ENCODE measurements at regions of chr17 and their contacts with region 1.

Region 1: DNA sequence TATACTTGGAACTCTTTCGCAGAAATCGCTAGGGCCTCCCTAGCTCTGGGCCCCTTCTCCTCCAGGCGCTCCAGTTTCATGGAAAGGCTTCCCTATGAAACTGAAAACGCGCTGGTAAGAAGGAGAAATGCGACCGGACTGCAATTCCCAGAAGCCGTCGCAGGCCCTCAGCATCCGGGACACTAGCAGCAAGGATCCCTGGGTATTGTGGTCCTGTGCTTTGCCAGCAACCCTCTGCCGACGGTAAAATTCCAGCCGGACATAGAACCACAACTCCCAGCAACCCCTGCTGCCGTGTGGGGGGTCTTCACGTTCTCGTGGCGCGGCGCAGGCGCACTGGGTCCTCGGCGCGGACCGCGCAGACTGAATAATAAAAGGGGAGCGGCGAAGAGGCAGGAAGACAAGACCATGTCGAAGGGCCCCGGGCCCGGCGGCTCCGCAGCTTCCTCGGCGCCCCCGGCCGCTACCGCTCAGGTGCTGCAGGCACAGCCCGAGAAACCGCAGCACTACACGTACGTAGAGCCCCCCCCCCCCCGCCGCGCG is at the start of gene UNK:
- DNase-seq: peak; percentile 89
- ATAC-seq: peak; percentile 73
- H3K4me3 Mint-ChIP-seq: peak within 1 kb of the TSS; percentile 86
- H3K27ac Mint-ChIP-seq: peak within 1 kb of the TSS; percentile 99
- H3K4me1 Mint-ChIP-seq: peaks cover 57% of the 10 kb centered on the region
- H3K27me3 Mint-ChIP-seq: no peaks in the 10 kb centered on the region
- CTCF ChIP-seq: no peak
- total RNA-seq, gene UNK: 52.3 and 61.2 TPM in 2 replicates

Region 2: GRCh38 chr17:75667021-75667790 is 117.3 kb before region 1 on chr17 and contains the starts of genes RECQL5 and SAP30BP:
- CTCF ChIA-PET with region 1: no interaction called
- POLR2A ChIA-PET with region 1: interaction called, 14 read pairs
- intact Hi-C with region 1: loop called (anchors 1 kb)
- DNase-seq: peak; percentile 95
- ATAC-seq: peak; percentile 74
- H3K4me3 Mint-ChIP-seq: peak within 1 kb of the TSS; percentile 55
- H3K27ac Mint-ChIP-seq: peak within 1 kb of the TSS; percentile 27
- H3K4me1 Mint-ChIP-seq: peaks cover 47% of the 10 kb centered on the region
- H3K27me3 Mint-ChIP-seq: no peaks in the 10 kb centered on the region
- CTCF ChIP-seq: no peak
- total RNA-seq, gene RECQL5: 55.9 and 65.4 TPM in 2 replicates
- total RNA-seq, gene SAP30BP: 177 and 184 TPM in 2 replicates

Region 3: DNA sequence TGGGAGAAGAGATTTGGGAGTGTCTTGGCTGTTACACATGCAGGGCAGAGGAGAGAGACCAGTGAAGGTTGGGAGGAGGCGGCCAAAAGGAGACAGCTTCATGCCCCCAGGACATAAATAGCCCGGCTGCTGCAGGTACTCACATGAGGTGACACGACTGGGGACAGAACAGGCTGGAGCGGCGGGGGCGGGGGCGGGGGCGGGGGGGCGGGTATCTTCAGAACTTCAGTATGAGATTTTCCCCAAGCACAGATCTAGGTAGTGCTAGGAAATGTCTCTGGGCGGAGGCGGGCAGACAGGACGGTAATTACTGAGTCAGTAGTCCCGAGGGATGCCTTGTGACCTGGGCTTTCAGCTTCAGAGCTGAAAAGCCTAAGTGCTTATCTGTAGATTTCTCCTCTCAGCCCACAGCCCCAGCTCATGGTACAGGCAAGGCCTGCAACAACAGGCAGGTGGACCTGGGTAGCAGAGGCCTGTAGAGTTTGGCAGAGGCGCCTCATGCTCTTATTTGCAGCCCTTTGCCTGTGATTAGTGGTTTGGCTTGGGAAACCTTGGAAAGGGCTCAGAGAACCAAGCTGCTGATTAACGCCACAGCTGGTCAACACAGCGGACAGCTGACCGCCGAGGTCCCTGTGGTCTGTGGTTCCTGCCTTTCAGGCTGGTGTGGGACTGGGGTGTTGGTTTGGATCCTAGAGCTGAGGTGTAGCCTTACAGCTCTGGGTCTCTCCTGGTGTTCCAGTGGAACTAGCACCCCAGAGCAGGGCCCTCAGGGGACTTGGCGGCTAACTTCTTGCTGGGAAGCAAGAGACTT is 24.6 kb after region 1 on chr17:
- CTCF ChIA-PET with region 1: no interaction called
- POLR2A ChIA-PET with region 1: interaction called, 21 read pairs
- intact Hi-C with region 1: loop called (anchors 2 kb)
- DNase-seq: no peak
- ATAC-seq: peak; percentile 99
- H3K4me3 Mint-ChIP-seq: no peak overlapping the region
- H3K27ac Mint-ChIP-seq: peak overlapping the region; percentile 19
- H3K4me1 Mint-ChIP-seq: peaks cover 15% of the 10 kb centered on the region
- H3K27me3 Mint-ChIP-seq: no peaks in the 10 kb centered on the region
- CTCF ChIP-seq: no peak

Region 4: GRCh38 chr17:75845049-75845860 is 60.7 kb after region 1 on chr17:
- CTCF ChIA-PET with region 1: interaction called, 9 read pairs
- POLR2A ChIA-PET with region 1: interaction called, 70 read pairs
- intact Hi-C with region 1: loop called (anchors 1 kb)
- DNase-seq: peak; percentile 71
- ATAC-seq: peak; percentile 90
- H3K4me3 Mint-ChIP-seq: peak overlapping the region; percentile 66
- H3K27ac Mint-ChIP-seq: peak overlapping the region; percentile 75
- H3K4me1 Mint-ChIP-seq: peaks cover 29% of the 10 kb centered on the region
- H3K27me3 Mint-ChIP-seq: no peaks in the 10 kb centered on the region
- CTCF ChIP-seq: no peak

Region 5: DNA sequence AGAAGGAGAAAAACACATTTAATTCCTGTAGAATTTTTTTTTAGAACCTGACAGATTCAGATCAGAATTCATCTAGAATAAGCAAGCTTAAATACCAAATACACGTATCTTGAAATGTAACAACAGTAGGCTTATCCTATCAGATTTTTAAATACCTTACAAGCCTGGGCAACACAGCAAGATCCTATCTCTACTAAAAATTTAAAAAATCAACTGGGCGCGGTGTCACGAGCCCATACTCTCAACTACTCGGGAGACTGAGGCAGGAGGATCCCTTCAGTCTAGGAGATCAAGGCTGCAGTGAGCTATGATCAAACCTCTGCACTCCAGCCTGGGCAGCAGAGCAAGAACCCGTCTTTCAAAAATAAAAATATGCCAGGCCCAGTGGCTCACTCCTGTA is 180.9 kb after region 1 on chr17:
- CTCF ChIA-PET with region 1: no interaction called
- POLR2A ChIA-PET with region 1: no interaction called
- intact Hi-C with region 1: no loop called
- DNase-seq: no peak
- ATAC-seq: no peak
- H3K4me3 Mint-ChIP-seq: no peak overlapping the region
- H3K27ac Mint-ChIP-seq: no peak overlapping the region
- H3K4me1 Mint-ChIP-seq: peaks cover 13% of the 10 kb centered on the region
- H3K27me3 Mint-ChIP-seq: no peaks in the 10 kb centered on the region
- CTCF ChIP-seq: no peak

Region 6: GRCh38 chr17:75978938-75979704 is 194.6 kb after region 1 on chr17 and contains the starts of genes ACOX1 and TEN1:
- CTCF ChIA-PET with region 1: no interaction called
- POLR2A ChIA-PET with region 1: interaction called, 14 read pairs
- intact Hi-C with region 1: loop called (anchors 1 kb)
- DNase-seq: peak; percentile 91
- ATAC-seq: peak; percentile 94
- H3K4me3 Mint-ChIP-seq: peak within 1 kb of the TSS; percentile 100
- H3K27ac Mint-ChIP-seq: peak within 1 kb of the TSS; percentile 100
- H3K4me1 Mint-ChIP-seq: peaks cover 37% of the 10 kb centered on the region
- H3K27me3 Mint-ChIP-seq: no peaks in the 10 kb centered on the region
- CTCF ChIP-seq: no peak
- total RNA-seq, gene ACOX1: 23.3 and 25.8 TPM in 2 replicates
- total RNA-seq, gene TEN1: 22.7 and 23.2 TPM in 2 replicates

Measured in activated B cell treated with CpG ODN at 0.5 μM for 24 hours (primary cell).